HepG2 (cell line): ENCODE measurements at regions of chr19 and their contacts with region 1.

Region 1: DNA sequence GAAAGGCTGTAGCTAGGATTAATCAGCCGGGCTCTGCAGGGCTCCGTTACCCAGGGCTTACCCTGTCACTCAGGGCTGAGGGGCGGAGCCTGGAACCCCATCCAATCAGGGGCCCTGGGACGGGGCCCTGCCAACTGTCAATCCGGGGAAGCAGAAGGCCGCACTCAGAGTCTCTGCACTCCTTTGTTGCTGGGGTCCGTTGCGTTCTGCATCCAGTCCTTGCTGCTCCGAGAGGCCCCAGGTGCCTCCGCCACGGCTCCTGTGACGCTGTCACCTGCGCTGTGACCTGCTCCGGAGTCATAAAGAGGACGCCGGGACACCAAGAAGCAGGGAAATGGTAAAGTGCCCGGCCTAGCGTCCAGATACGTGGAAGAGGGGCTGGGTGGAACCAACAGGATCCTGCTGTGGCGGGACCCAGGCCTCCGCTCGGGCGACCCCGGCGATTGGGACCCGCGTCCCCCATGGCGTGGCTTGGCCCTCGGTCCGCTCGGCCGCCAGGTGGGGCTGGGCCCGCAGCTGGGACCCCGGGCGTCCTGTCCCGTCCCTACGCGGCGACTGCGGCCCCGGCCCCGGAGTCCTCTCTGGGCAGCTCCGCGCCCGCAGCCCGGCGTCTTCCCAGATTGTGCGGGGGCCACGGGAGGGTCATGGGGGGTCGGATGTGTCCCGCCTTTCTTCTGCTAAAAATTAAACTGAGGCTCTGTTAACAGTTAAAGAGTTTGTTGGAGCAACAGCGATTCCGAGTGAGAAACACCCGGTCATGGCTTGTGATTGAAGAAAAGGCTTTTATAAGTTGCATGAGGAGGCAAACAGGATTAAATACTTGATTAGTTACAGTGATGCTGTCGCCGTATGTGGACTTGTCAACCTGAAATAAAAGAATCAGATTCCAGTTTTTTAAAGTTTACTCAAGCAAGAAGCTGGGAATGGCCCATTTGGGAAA is at the start of gene ZNF491:
- DNase-seq: peak; percentile 87
- ATAC-seq: peak; percentile 98
- H3K4me3 ChIP-seq: peak within 1 kb of the TSS; percentile 63 to 90 (median 79)
- H3K27ac ChIP-seq: peak within 1 kb of the TSS; percentile 79
- H3K4me1 ChIP-seq: peaks cover 33% of the 10 kb centered on the region
- H3K27me3 ChIP-seq: no peaks in the 10 kb centered on the region; a peak in 1 of 5 replicates
- CTCF ChIP-seq: peak; percentile 69
- EP300 ChIP-seq: no peak
- POLR2A ChIP-seq: peak; percentile 79 to 88
- RAD21 ChIP-seq: peak; percentile 79
- total RNA-seq, gene ZNF491: 1.7 and 2.2 TPM in 2 replicates

Region 2: GRCh38 chr19:11380653-11381534 is 417.8 kb before region 1 on chr19:
- CTCF ChIA-PET with region 1: no interaction called
- POLR2A ChIA-PET with region 1: no interaction called
- in situ Hi-C with region 1: no loop called
- intact Hi-C with region 1: no loop called
- DNase-seq: peak; percentile 98
- ATAC-seq: peak; percentile 82
- H3K4me3 ChIP-seq: peak overlapping the region; percentile 40 to 71 (median 63)
- H3K27ac ChIP-seq: peak overlapping the region; percentile 52
- H3K4me1 ChIP-seq: peaks cover 49% of the 10 kb centered on the region
- H3K27me3 ChIP-seq: no peaks in the 10 kb centered on the region
- CTCF ChIP-seq: peak; percentile 95
- EP300 ChIP-seq: no peak; a peak in 1 of 4 replicates
- POLR2A ChIP-seq: peak; percentile 63 to 85
- RAD21 ChIP-seq: peak; percentile 94

Region 3: DNA sequence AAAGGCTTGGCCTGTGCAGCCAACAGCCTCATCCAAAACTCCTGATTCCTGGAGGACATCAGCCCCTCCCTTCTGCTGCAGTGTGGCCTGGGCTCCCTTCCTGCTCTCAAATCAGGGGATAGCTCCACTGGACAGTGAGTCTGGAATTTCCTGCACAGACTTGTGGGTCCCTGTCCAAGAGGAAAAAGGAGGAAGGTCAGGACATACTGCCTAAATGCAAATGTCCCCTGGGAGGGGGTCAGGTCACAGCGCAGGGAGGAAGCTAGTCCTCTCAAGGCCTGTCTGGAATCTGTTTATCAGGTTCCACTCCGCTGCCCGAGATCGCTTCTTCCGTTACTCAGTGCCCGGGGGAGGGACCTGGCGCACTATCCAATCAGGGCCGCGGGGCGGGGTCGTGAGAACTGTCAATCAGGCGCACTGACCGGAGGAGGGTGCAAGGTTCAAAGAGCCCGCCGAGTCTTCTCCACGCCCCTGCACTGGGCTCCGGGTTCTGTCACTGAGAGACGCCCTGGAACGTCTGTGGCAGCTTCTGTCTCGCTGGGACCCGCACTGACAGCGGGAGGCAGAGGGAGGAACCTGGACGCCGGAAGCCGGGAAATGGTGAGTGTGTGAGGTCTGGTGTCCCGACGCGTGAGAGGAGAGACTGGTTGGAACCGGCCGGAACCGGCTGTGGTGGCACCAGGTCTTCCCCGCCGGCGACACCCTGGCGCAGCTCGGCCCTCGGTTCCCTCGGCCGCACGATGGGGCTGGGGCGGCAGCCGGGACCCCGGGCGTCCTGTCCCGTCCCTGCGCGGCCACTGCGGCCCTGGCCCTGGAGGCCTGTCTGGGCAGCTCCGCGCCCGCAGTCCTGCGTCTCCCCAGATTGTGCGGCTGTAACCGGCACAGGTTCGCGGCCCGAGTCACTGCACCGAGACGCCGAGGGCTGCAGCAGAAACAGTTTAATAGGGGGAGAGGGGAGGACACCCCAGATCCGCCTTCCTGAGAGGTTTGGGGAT is 31.8 kb before region 1 on chr19 and contains the start of gene ZNF441:
- CTCF ChIA-PET with region 1: no interaction called
- POLR2A ChIA-PET with region 1: interaction called, 15 read pairs
- in situ Hi-C with region 1: no loop called
- intact Hi-C with region 1: no loop called
- DNase-seq: peak; percentile 94
- ATAC-seq: peak; percentile 93
- H3K4me3 ChIP-seq: peak within 1 kb of the TSS; percentile 72 to 89 (median 81)
- H3K27ac ChIP-seq: peak within 1 kb of the TSS; percentile 85
- H3K4me1 ChIP-seq: peaks cover 32% of the 10 kb centered on the region
- H3K27me3 ChIP-seq: no peaks in the 10 kb centered on the region; a peak in 2 of 5 replicates
- CTCF ChIP-seq: no peak
- EP300 ChIP-seq: 0 out of 4 replicates have a peak, but pooled peaks of 1 of the 2 experiments have one; percentile 22
- POLR2A ChIP-seq: peak; percentile 77 to 93
- RAD21 ChIP-seq: no peak; the same call in 1 of the 2 replicates
- total RNA-seq, gene ZNF441: 10.0 and 18.0 TPM in 2 replicates

Region 4: DNA sequence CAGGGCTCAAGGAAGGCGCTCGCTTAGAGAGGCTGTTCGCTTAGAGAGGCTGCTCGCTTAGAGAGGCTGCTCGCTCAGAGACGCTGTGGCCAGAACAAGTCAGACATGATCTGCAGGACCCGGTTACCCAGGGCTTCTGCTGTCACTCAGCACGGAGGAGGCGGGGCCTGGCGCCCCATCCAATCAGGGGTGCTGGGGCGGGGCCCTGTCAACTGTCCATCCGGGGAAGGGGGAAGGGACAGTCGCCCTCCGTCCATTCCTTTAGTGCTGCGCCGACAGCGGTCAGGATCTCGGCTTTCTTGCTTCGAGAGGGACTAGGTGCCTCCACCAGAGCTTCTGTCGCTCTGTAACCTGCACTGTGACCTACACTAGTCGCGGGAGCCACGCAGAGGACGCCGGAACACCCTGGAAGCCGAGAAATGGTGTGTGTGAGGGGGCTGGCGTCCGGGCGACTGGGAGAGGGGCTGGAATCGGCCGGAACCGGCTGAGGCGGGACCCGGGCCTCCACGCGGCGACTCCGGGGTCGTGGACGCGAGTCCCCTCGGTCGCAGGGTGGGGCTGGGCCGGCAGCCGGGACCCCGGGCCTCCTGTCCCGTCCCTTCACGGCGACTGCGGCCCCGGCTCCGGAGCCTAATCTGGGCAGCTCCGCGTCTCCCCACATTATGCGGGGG is 15.5 kb after region 1 on chr19 and contains the start of gene ZNF440:
- CTCF ChIA-PET with region 1: interaction called, 37 read pairs
- POLR2A ChIA-PET with region 1: interaction called, 27 read pairs
- in situ Hi-C with region 1: no loop called
- intact Hi-C with region 1: loop called (anchors 1 kb)
- DNase-seq: peak; percentile 92
- ATAC-seq: peak; percentile 99
- H3K4me3 ChIP-seq: peak within 1 kb of the TSS; percentile 84 to 99 (median 91)
- H3K27ac ChIP-seq: peak within 1 kb of the TSS; percentile 89
- H3K4me1 ChIP-seq: peaks cover 32% of the 10 kb centered on the region
- H3K27me3 ChIP-seq: no peaks in the 10 kb centered on the region; a peak in 1 of 5 replicates
- CTCF ChIP-seq: no peak
- EP300 ChIP-seq: no peak
- POLR2A ChIP-seq: peak; percentile 97 to 99
- RAD21 ChIP-seq: no peak
- total RNA-seq, gene ZNF440: 12.4 and 16.8 TPM in 2 replicates

Region 5: DNA sequence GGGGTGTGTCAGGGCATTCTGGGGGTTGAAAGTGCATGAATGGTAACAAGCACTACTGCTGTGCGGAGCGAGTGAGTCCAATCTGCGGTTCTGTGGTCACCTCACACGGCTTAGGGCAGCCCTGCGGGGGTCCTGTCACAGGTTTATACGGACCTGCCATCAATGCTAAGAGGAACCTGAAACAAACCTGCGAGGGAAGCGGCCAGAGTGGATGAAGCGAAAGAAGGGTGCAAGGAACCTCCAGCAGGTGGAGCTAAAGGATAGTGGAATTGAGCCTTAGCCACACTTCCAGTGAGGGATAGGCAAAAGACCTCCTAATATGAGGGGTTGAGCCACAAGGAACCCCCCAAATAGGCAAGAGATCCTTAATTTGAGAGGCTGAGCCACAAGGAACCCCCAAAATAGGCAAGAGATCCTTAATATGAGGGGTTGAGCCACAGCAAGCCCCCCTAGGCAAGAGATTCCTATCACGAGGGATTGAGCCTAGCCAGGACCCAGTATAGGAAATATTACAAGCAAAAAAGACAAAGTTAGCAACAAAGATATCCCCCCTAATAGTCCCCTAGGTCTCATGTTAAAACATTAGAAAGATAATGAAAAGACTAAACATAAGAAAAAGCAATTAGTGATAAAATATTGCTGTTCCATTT is 82.6 kb after region 1 on chr19:
- CTCF ChIA-PET with region 1: interaction called, 4 read pairs
- POLR2A ChIA-PET with region 1: interaction called, 4 read pairs
- in situ Hi-C with region 1: no loop called
- intact Hi-C with region 1: loop called (anchors 2 kb)
- DNase-seq: peak; percentile 49
- ATAC-seq: peak; percentile 81
- H3K4me3 ChIP-seq: no peak overlapping the region
- H3K27ac ChIP-seq: no peak overlapping the region
- H3K4me1 ChIP-seq: peaks cover 9% of the 10 kb centered on the region; the same call in 1 of the 2 replicates
- H3K27me3 ChIP-seq: no peaks in the 10 kb centered on the region
- CTCF ChIP-seq: peak; percentile 94
- EP300 ChIP-seq: no peak
- POLR2A ChIP-seq: no peak
- RAD21 ChIP-seq: peak; percentile 87

Region 6: GRCh38 chr19:11924886-11925650 is 126.4 kb after region 1 on chr19 and contains the start of gene ZNF700:
- CTCF ChIA-PET with region 1: no interaction called
- POLR2A ChIA-PET with region 1: interaction called, 10 read pairs
- in situ Hi-C with region 1: no loop called
- intact Hi-C with region 1: no loop called
- DNase-seq: peak; percentile 93
- ATAC-seq: peak; percentile 90
- H3K4me3 ChIP-seq: peak within 1 kb of the TSS; percentile 80 to 88 (median 85)
- H3K27ac ChIP-seq: peak within 1 kb of the TSS; percentile 97
- H3K4me1 ChIP-seq: peaks cover 51% of the 10 kb centered on the region
- H3K27me3 ChIP-seq: no peaks in the 10 kb centered on the region; a peak in 1 of 5 replicates
- CTCF ChIP-seq: no peak
- EP300 ChIP-seq: no peak
- POLR2A ChIP-seq: peak; percentile 84 to 97
- RAD21 ChIP-seq: peak; percentile 35
- total RNA-seq, gene ZNF700: 12.8 and 16.5 TPM in 2 replicates

Region 7: DNA sequence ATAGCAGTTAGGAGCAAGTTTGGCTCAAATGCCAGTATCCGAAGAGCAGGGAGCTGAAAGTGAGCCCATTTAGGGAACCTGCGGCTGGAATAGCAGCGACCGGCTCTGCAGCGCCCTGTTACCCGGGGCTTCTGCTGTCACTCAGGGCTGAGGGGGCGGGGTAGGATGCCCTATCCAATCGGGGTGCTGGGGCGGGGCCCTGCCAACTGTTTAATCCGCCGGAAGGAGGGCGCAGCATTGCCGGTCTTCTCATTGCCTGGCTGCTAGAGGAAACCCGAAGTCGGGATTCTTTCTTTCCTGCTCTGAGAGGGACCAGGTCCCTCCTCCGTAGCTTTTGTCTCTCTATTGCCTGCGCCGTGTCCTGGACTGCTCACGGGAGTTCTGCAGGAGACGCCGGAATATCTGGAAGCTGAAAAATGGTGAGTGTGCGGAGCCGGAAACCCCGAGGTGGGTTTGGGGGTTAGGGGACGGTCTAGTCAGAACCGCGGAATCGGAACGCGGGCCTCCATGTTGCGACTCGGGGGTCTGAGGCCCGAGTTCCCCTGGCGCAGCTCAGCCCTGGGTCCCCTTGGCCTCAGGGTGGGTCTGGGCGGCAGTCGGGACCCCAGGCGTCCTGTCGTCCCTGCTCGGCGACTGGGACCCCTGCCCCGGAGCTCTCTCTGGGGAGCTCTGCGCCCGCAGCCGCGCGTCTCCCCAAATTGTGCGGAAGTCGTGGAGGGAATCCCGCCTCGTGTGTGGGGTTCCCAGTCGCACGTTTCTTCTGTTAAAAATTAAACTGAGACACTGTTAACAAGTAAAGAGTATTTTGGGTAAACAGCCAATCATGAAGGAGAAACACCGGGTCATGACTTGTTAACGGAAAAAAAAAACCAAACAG is 189.0 kb after region 1 on chr19:
- CTCF ChIA-PET with region 1: interaction called, 3 read pairs
- POLR2A ChIA-PET with region 1: interaction called, 5 read pairs
- in situ Hi-C with region 1: no loop called
- intact Hi-C with region 1: loop called (anchors 1 kb)
- DNase-seq: peak; percentile 55
- ATAC-seq: peak; percentile 91
- H3K4me3 ChIP-seq: peak overlapping the region; percentile 48 to 72 (median 65); a peak in 5 of 6 replicates
- H3K27ac ChIP-seq: peak overlapping the region; percentile 40
- H3K4me1 ChIP-seq: peaks cover 18% of the 10 kb centered on the region; the same call in 1 of the 2 replicates
- H3K27me3 ChIP-seq: peaks cover 0 to 1% of the 10 kb centered on the region in 2 experiments; a peak in 1 of 5 replicates
- CTCF ChIP-seq: no peak
- EP300 ChIP-seq: no peak
- POLR2A ChIP-seq: peak; percentile 29 to 81; a peak in 3 of 4 replicates
- RAD21 ChIP-seq: no peak

Region 8: DNA sequence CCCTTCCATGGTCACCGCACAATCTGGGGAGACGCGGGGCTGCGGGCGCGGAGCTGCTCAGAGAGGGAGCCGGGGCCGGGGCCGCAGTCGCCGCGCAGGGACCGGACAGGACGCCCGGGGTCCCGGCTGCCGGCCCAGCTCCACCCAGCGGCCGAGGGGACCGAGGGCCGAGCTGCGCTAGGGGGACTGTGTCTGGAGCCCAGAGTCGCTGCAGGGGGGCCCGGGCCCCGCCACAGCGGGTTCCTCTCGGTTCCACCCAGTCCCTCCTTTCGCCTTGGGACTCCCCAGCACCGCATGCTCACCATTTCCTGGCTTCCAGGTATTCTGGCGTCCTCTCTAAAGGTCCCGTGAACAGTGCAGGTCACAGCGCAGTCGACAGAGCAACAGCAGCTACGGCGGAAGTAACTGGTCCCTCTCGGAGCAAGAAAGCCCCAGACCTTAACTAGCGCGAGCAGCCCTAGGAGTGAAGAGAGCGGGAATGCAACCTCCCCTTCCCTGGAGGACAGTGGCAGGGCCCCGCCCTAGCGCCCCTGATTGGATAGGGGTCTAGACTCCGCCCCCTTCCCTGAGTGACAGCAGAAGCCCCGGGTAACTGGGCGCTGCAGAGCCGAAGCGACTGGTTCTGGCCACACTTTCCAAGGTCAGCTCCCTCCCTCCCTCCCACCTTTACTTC is 254.0 kb after region 1 on chr19 and contains the start of gene ZNF878:
- CTCF ChIA-PET with region 1: no interaction called
- POLR2A ChIA-PET with region 1: interaction called, 10 read pairs
- in situ Hi-C with region 1: no loop called
- intact Hi-C with region 1: no loop called
- DNase-seq: peak; percentile 97
- ATAC-seq: peak; percentile 98
- H3K4me3 ChIP-seq: peak within 1 kb of the TSS; percentile 77 to 97 (median 90)
- H3K27ac ChIP-seq: peak within 1 kb of the TSS; percentile 93
- H3K4me1 ChIP-seq: peaks cover 45% of the 10 kb centered on the region
- H3K27me3 ChIP-seq: peaks cover 0 to 10% of the 10 kb centered on the region in 2 experiments; a peak in 2 of 5 replicates
- CTCF ChIP-seq: peak; percentile 51
- EP300 ChIP-seq: no peak
- POLR2A ChIP-seq: peak; percentile 100
- RAD21 ChIP-seq: peak; percentile 71
- total RNA-seq, gene ZNF878: 5.2 and 6.4 TPM in 2 replicates